ENCODE measurements at regions of chr14 and their contacts with region 1.

Region 1: DNA sequence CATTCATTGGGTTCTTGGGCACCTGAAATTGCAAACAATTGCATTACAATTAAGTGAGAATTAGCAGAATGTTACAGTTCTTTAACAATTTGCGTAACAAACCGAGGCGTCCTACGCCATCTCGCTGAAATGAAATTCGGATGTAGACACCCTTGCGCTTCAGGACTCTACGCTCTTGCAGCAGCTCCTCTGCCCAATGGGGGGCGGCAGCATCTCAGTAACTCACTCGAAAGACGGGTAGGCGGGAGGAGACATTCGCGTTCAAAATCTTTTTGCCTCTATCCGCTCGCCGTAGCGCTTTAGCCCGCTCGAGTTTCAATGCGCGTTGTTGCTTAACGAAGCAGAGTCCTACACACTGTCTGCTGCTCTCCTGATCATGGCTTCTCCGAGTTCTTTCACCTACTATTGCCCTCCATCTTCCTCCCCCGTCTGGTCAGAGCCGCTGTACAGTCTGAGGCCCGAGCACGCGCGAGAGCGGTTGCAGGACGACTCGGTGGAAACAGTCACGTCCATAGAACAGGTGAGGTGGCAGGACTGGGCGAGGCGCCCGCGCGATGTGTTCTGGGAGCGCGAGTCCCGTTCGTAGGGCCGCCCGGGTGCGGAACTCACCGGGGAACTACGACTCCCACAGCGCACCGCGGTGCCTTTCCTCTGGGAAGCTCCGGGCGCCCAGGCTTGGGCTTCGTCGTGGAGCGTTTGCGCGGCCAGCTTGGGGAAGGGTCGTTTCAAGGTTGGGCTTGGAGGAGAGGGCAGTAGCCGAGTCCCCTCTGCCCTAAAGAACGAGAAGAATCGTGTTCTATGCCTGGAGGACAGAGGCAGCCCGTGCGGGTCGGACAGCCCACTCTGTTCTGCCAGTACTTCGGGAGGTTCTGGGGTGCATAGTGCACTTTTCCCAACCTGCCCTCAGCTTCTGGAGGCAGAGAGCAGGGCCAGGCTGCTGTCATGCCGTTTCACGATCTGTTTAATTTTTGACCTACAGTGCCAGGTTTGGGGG is at the start of gene FNTB:
- DNase-seq: peak; percentile 97 to 98
- ATAC-seq: peak; percentile 95 to 97
- H3K4me3 ChIP-seq: peak within 1 kb of the TSS; percentile 83
- H3K27ac ChIP-seq: peak within 1 kb of the TSS; percentile 86 to 93
- H3K4me1 ChIP-seq: peaks cover 12% of the 10 kb centered on the region; the same call in 1 of the 3 replicates
- CTCF ChIP-seq: peak; percentile 72
- EP300 ChIP-seq: peak in 1 of 2 experiments; percentile 23; a peak in 1 of 5 replicates
- POLR2A ChIP-seq: peak; percentile 56
- RAD21 ChIP-seq: peak; percentile 83 to 90
- polyA plus RNA-seq, gene FNTB: 28.5 and 35.8 TPM in 2 replicates

Region 2: DNA sequence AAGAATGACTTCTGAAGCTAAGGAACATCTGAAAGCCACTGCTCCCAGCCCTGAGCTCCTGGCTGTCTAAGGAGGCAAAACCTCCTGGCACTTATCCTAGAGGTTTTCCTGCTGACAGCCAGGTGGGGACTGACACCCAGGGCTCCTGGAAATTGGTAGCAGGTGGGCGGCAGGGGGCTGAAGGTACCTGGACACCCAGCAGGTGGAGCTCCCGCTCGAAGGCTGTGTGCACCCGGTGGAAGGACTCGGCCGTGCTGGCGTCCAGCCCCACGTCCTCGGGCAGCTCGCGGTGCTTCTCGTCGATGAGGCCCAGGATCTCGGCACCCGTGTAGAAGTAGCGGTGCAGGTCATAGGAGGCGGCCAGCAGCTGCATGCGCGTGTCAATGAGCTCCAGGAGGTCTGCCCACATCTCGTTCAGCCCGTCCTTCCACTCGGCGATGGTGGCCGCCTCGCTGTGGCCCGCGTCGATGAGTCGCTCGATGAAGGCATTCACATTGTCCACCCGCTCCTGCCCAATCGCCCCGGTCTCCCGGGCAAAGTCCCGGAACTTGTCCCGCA is 214.4 kb before region 1 on chr14:
- CTCF ChIA-PET with region 1: no interaction called
- POLR2A ChIA-PET with region 1: no interaction called
- DNase-seq: no peak
- ATAC-seq: peak in 1 of 2 experiments; percentile 54; a peak in 2 of 6 replicates
- H3K4me3 ChIP-seq: no peak overlapping the region
- H3K27ac ChIP-seq: no peak overlapping the region
- H3K4me1 ChIP-seq: no peaks in the 10 kb centered on the region
- CTCF ChIP-seq: peak; percentile 18; the same call in 1 of the 3 replicates
- EP300 ChIP-seq: no peak
- POLR2A ChIP-seq: no peak
- RAD21 ChIP-seq: peak in 1 of 2 experiments; percentile 21; a peak in 1 of 5 replicates

Region 3: DNA sequence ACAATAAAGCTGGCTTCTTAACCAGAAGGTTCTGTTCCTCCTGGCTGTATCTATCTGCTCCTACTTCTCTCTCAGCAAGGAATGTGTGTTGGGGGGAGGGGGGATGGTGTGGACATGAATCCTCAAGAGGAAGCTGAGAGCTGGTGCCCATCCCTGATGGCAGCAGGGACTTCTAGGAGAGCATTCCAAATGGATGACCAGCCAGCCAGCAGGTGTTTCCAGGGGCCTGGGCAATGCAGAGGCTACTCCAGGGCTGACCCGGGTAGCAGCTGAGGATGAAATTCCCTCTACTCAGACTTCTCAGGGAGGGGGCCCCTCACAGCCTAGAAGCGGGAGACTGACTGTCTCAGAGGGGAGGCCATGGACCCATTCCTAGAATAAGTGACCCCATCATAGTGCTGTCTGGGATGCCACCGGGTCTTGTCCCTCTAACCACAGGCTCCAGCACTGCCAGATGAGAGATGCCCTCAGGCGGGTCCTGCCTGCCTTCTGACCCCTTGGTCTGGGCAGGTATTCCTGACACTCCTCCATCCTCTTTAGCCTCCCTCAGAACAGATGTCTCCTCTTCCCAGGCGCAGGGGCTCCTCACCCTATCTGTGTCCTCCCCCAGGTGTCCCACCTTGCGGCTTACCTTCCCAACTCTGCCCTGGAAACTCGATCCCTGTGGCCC is 15.9 kb before region 1 on chr14:
- CTCF ChIA-PET with region 1: interaction called, 14 read pairs
- POLR2A ChIA-PET with region 1: interaction called, 5 read pairs
- DNase-seq: peak; percentile 23 to 46
- ATAC-seq: peak; percentile 37 to 45; a peak in 3 of 6 replicates
- H3K4me3 ChIP-seq: peak overlapping the region; percentile 61
- H3K27ac ChIP-seq: peak overlapping the region; percentile 79 to 94
- H3K4me1 ChIP-seq: peaks cover 22% of the 10 kb centered on the region; the same call in 2 of the 3 replicates
- CTCF ChIP-seq: no peak
- EP300 ChIP-seq: no peak
- POLR2A ChIP-seq: no peak
- RAD21 ChIP-seq: no peak

Region 4: DNA sequence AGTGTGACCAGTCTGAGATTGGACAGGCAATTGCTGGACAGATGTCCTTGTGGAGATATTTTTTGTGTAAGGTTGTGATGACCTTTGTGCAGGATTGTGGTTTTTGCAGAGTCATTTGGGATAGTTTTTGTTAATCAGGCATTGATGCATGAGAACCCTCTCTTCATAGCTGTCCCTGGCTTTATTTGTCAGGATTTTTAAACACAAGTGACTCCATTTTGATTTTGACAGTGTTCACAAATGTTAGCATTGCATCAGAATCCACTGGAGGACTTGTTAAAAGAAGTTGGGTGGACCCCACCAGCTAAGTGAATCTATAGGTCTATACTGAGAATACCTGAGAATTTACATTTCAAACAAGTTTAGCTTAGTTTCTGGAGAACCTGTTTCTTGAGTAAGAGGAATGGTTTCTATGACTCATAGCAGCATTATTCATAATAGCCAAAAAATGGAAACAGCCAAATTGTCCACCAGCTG is 11.6 kb after region 1 on chr14:
- CTCF ChIA-PET with region 1: interaction called, 16 read pairs
- POLR2A ChIA-PET with region 1: interaction called, 4 read pairs
- DNase-seq: no peak
- ATAC-seq: no peak
- H3K4me3 ChIP-seq: no peak overlapping the region
- H3K27ac ChIP-seq: no peak overlapping the region
- H3K4me1 ChIP-seq: peaks cover 5% of the 10 kb centered on the region; the same call in 2 of the 3 replicates
- CTCF ChIP-seq: no peak
- EP300 ChIP-seq: no peak
- POLR2A ChIP-seq: no peak
- RAD21 ChIP-seq: no peak

Region 5: DNA sequence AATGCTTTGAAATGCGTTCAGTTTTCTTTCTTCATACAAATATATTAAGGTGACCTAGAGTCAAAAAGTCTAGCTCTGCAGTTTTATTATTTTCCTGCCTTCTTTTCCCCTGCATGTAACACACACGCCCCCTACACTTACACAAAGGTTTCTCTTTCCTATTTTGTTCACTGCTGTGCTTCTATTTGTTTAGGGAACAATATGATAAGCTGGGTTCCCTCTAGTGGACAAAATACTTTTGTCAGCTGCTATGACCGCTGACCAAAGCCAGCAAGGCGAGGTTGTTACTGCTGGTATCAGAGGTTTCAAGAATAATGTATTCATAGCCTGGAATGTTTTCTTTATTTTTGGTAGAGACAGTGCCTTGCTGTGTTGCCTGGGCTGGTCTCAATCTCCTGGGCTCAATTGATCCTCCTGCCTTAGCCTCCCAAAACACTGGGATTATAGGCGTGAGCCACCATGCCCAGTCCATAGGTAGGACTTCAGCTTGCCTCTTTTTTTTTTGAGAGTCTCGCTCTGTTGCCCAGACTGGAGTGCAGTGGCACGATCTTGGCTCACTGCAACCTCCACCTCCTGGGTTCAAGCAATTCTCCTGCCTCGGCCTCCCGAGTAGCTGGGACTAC is 33.2 kb after region 1 on chr14:
- CTCF ChIA-PET with region 1: interaction called, 30 read pairs
- POLR2A ChIA-PET with region 1: interaction called, 12 read pairs
- DNase-seq: peak; percentile 51 to 80
- ATAC-seq: peak; percentile 99
- H3K4me3 ChIP-seq: no peak overlapping the region
- H3K27ac ChIP-seq: no peak overlapping the region
- H3K4me1 ChIP-seq: no peaks in the 10 kb centered on the region
- CTCF ChIP-seq: peak; percentile 64
- EP300 ChIP-seq: no peak
- POLR2A ChIP-seq: no peak
- RAD21 ChIP-seq: peak; percentile 52 to 54; a peak in 4 of 5 replicates